ENCODE measurements at regions of chr3 and their contacts with region 1.

Region 1: DNA sequence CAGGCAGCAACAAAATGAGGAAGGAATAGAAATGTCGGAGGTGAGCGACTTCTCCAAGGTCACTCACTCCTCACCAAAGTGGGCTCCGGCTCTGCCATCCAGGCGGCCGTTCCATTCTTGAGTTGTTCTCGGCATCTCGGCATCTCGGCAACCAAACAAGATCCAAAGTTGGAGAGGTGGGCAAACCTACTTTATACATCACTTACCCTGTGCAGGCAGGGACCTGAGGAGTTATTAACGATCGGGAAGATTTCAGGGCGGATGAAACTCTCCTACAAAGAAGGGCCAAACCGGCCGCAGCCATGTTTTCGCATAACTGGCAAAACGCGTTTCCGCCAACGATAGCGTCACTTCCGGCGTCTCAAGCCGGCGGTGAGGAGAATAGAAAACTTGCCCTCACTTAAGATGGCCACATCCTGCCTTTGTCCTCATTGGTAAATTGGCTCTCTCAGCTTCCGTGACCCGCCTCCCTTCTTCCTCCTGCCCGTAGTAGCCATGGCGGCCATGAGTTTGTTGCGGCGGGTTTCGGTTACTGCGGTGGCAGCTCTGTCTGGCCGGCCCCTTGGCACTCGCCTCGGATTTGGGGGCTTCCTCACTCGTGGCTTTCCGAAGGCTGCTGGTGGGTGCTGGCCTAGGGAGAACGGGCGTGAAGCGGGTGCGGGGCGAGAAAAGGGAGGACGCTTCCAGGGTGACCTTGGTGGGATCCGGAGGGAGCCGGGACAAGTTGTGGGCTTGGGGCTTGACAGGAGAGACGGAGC is at the starts of genes MRPL47 and NDUFB5:
- DNase-seq: peak; percentile 90
- ATAC-seq: peak; percentile 95
- H3K4me3 ChIP-seq: peak within 1 kb of the TSS; percentile 85
- H3K27ac ChIP-seq: peak within 1 kb of the TSS; percentile 69
- H3K4me1 ChIP-seq: peaks cover 18% of the 10 kb centered on the region
- H3K27me3 ChIP-seq: no peaks in the 10 kb centered on the region
- CTCF ChIP-seq: no peak
- EP300 ChIP-seq: no peak
- POLR2A ChIP-seq: peak; percentile 93
- RAD21 ChIP-seq: no peak
- polyA plus RNA-seq, gene MRPL47: 215 to 237 TPM
- polyA plus RNA-seq, gene NDUFB5: 318 to 320 TPM

Region 2: GRCh38 chr3:179347345-179348194 is 256.9 kb before region 1 on chr3 and contains the start of gene MFN1:
- CTCF ChIA-PET with region 1: no interaction called
- POLR2A ChIA-PET with region 1: interaction called, 4 read pairs
- RAD21 ChIA-PET with region 1: no interaction called
- SMC1A ChIA-PET with region 1: interaction called, 3 read pairs
- in situ Hi-C with region 1: no loop called
- intact Hi-C with region 1: loop called (anchors 5 kb)
- DNase-seq: peak; percentile 87
- ATAC-seq: peak; percentile 95
- H3K4me3 ChIP-seq: peak within 1 kb of the TSS; percentile 71
- H3K27ac ChIP-seq: peak within 1 kb of the TSS; percentile 96
- H3K4me1 ChIP-seq: no peaks in the 10 kb centered on the region; the same call in 1 of the 2 replicates
- H3K27me3 ChIP-seq: no peaks in the 10 kb centered on the region
- CTCF ChIP-seq: no peak
- EP300 ChIP-seq: no peak
- POLR2A ChIP-seq: peak; percentile 98
- RAD21 ChIP-seq: no peak
- polyA plus RNA-seq, gene MFN1: 14.4 to 15.9 TPM

Region 3: GRCh38 chr3:179653096-179653797 is 48.7 kb after region 1 on chr3:
- CTCF ChIA-PET with region 1: interaction called, 4 read pairs
- POLR2A ChIA-PET with region 1: interaction called, 6 read pairs
- RAD21 ChIA-PET with region 1: no interaction called
- SMC1A ChIA-PET with region 1: no interaction called
- in situ Hi-C with region 1: no loop called
- intact Hi-C with region 1: loop called (anchors 2 kb)
- DNase-seq: no peak
- ATAC-seq: peak; percentile 69
- H3K4me3 ChIP-seq: peak overlapping the region; percentile 99
- H3K27ac ChIP-seq: peak overlapping the region; percentile 73
- H3K4me1 ChIP-seq: no peaks in the 10 kb centered on the region
- H3K27me3 ChIP-seq: no peaks in the 10 kb centered on the region
- CTCF ChIP-seq: peak in 2 of 3 experiments; percentile 8 to 36; a peak in 3 of 6 replicates
- EP300 ChIP-seq: no peak
- POLR2A ChIP-seq: peak; percentile 79
- RAD21 ChIP-seq: no peak; the same call in 1 of the 2 replicates

Region 4: DNA sequence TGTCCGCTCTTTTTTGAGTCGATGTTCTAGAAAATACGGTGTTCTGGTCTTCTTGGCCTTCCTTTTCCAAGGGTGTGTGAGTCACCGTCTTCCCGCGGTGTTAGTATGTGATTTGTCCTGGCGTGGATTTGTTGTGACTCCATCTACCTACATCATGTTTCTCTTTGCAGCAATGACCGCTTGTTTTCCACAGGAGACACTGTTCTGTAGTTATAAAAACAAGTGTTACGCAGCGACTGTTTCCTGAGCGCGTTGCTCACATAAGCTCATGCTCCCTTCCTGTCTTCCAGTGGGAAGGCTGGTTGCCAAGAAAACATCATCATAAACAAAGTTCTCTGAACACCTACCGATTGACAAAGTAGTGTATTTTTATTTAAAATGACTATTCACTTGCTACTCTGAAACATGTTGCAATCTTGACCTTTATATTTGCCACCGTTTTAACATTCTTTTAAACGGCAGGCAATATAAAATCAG is 67.3 kb after region 1 on chr3:
- CTCF ChIA-PET with region 1: no interaction called
- POLR2A ChIA-PET with region 1: no interaction called
- RAD21 ChIA-PET with region 1: no interaction called
- SMC1A ChIA-PET with region 1: no interaction called
- in situ Hi-C with region 1: no loop called
- intact Hi-C with region 1: no loop called
- DNase-seq: no peak
- ATAC-seq: no peak
- H3K4me3 ChIP-seq: no peak overlapping the region
- H3K27ac ChIP-seq: no peak overlapping the region
- H3K4me1 ChIP-seq: no peaks in the 10 kb centered on the region
- H3K27me3 ChIP-seq: no peaks in the 10 kb centered on the region
- CTCF ChIP-seq: no peak
- EP300 ChIP-seq: no peak
- POLR2A ChIP-seq: no peak
- RAD21 ChIP-seq: no peak

Measured in GM12878 (cell line).